SK-N-SH (cell line): ENCODE measurements at regions of chr5 and their contacts with region 1.

Region 1: DNA sequence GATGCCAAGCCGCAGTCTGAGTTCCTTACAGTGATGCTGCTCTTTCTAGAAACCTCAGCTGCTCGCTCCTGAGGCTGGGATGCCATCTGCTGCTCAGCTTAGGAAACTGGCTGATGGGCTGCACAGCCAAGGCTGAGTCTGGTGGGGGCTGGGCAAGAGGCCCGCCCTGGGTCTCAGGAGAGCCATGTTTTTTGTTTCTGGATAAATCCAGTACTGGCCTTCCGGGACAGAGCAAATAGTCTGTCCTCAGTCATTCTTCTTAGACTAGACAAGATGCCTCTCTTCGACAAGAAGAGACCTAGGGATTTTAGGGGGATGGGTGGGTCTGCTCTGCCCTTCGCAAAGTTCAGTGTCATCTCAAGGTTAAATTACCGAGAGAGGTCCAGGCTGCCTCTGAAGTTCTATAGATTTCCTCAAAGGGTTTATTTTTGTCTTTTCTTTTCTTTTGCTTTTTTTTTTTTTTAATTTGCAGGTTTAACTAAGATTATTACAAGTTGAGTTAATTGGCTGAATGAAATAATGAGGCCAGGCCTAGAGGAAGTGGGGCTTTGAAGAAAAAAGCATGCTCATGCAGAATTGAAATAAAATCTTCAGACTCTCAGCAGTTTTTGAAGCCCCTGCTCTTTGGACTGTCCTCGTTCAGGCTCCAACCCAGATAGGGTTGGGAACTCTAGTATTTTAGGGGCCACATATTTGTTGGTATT is 30.6 kb upstream of the MATR3 start:
- DNase-seq: peak; percentile 87
- H3K4me3 ChIP-seq: no peak overlapping the region
- H3K27ac ChIP-seq: peak overlapping the region in 1 of 2 experiments; percentile 39; a peak in 1 of 4 replicates
- H3K4me1 ChIP-seq: peaks cover 0 to 9% of the 10 kb centered on the region in 2 experiments; a peak in 1 of 4 replicates
- H3K27me3 ChIP-seq: no peaks in the 10 kb centered on the region
- CTCF ChIP-seq: peak; percentile 93
- EP300 ChIP-seq: no peak
- RAD21 ChIP-seq: peak; percentile 100

Region 2: GRCh38 chr5:138641547-138642298 is 621.2 kb before region 1 on chr5:
- CTCF ChIA-PET with region 1: interaction called, 13 read pairs
- POLR2A ChIA-PET with region 1: no interaction called
- DNase-seq: peak; percentile 74
- H3K4me3 ChIP-seq: peak overlapping the region in 1 of 2 experiments; percentile 44; a peak in 1 of 4 replicates
- H3K27ac ChIP-seq: no peak overlapping the region
- H3K4me1 ChIP-seq: peaks cover 0 to 19% of the 10 kb centered on the region in 2 experiments; a peak in 1 of 4 replicates
- H3K27me3 ChIP-seq: no peaks in the 10 kb centered on the region; the same call in 1 of the 2 replicates
- CTCF ChIP-seq: peak; percentile 91
- EP300 ChIP-seq: no peak
- RAD21 ChIP-seq: peak; percentile 87

Region 3: GRCh38 chr5:138649316-138649720 is 613.6 kb before region 1 on chr5:
- CTCF ChIA-PET with region 1: interaction called, 11 read pairs
- POLR2A ChIA-PET with region 1: no interaction called
- DNase-seq: no peak
- H3K4me3 ChIP-seq: no peak overlapping the region
- H3K27ac ChIP-seq: no peak overlapping the region
- H3K4me1 ChIP-seq: peaks cover 0 to 27% of the 10 kb centered on the region in 2 experiments; a peak in 1 of 4 replicates
- H3K27me3 ChIP-seq: no peaks in the 10 kb centered on the region
- CTCF ChIP-seq: no peak
- EP300 ChIP-seq: no peak
- RAD21 ChIP-seq: no peak

Region 4: DNA sequence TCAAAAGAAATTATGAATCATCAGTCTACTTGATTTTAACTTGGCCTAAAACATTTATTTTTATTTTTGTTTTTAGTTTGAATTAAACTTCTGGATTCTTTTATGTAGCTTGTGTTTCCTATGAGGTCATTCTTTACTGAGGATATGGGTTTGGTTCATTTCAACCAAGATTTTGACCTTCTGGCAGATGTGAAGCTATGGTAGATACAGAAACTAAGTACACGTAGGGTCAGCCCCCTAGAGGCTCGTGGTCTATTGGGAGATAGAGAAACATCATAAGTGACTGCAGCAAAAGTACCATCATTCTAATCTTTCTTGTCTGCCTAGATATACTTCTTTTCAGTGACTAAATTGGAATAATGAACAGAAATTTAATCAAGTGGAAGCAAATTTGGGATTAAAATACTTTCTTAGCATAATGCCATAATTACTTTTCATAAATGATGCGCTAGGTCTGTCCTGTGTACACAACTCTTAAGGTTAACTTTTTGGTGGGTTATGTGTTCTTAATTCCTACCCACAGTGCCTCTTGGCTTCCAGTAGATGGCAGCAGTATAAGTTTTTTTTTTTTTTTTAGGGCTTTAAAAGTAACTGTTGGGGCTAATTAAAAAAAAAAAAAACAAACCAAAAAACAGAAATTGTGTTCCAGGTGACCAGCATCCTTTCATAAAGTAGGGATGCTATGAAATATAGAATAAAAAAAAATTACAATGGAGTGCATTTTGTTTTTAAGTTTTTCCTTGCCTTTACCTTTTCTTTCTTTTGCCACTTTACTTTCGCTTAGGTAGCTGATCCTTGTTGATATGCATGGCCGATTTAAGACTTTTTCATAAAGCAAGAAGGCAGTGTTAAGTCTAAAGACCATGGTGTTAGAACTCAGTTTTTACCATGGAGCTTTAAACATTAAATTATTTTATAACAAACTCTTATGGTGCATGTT is 437.7 kb before region 1 on chr5:
- CTCF ChIA-PET with region 1: interaction called, 25 read pairs
- POLR2A ChIA-PET with region 1: no interaction called
- DNase-seq: peak; percentile 61
- H3K4me3 ChIP-seq: no peak overlapping the region
- H3K27ac ChIP-seq: peak overlapping the region; percentile 39 to 52; a peak in 3 of 4 replicates
- H3K4me1 ChIP-seq: no peaks in the 10 kb centered on the region; a peak in 2 of 4 replicates
- H3K27me3 ChIP-seq: no peaks in the 10 kb centered on the region
- CTCF ChIP-seq: peak; percentile 69
- EP300 ChIP-seq: no peak
- RAD21 ChIP-seq: peak; percentile 59; the same call in 1 of the 2 replicates

Region 5: GRCh38 chr5:138874771-138875551 is 387.9 kb before region 1 on chr5 and contains the start of gene LRRTM2:
- CTCF ChIA-PET with region 1: interaction called, 14 read pairs
- POLR2A ChIA-PET with region 1: no interaction called
- DNase-seq: peak; percentile 63
- H3K4me3 ChIP-seq: peak within 1 kb of the TSS; percentile 53 to 61
- H3K27ac ChIP-seq: peak within 1 kb of the TSS; percentile 78 to 92
- H3K4me1 ChIP-seq: peaks cover 43 to 48% of the 10 kb centered on the region in 2 experiments
- H3K27me3 ChIP-seq: no peaks in the 10 kb centered on the region
- CTCF ChIP-seq: no peak
- EP300 ChIP-seq: no peak
- RAD21 ChIP-seq: no peak
- polyA plus RNA-seq, gene LRRTM2: 0.38 and 0.68 TPM in 2 replicates

Region 6: GRCh38 chr5:139251281-139251687 is 11.6 kb before region 1 on chr5:
- CTCF ChIA-PET with region 1: interaction called, 10 read pairs
- POLR2A ChIA-PET with region 1: no interaction called
- DNase-seq: no peak
- H3K4me3 ChIP-seq: no peak overlapping the region
- H3K27ac ChIP-seq: no peak overlapping the region
- H3K4me1 ChIP-seq: peaks cover 0 to 5% of the 10 kb centered on the region in 2 experiments; a peak in 2 of 4 replicates
- H3K27me3 ChIP-seq: no peaks in the 10 kb centered on the region; the same call in 1 of the 2 replicates
- CTCF ChIP-seq: peak; percentile 39
- EP300 ChIP-seq: no peak
- RAD21 ChIP-seq: no peak

Region 7: DNA sequence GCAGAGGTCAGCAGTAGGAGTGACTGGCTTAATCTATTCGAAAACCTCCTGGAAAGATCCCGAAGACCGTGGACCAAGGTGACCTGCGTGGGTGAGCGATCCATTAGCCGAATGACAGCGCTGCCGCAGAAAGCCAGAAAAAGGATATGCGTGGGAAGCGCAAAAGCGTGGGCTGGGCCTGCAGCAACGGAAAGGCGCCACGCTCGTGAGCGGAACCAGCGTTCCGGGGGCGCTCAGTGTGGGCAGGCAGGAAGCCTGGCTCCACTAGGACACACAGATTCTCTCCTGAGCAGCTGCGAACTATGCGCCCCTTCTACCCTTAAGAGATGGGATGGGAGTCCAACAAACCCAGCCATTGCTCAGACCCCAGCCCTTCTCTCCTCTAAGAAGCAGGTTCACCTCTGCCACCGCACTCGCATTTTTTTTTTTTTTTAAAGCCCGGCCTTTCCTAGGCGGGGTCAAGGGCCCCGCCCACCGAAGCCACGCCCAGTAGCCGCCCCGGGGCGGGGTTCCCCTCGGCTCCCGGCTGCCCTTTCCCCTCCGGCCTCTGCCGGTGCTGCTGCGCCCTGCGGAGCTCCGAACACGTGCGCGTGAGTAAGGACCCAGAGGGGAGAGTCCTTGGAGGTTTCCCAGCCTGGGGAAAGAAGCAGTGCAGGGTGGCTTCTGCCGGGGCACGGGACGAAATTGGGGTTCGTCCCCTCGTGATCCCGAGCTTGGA is 10.8 kb after region 1 on chr5:
- CTCF ChIA-PET with region 1: interaction called, 11 read pairs
- POLR2A ChIA-PET with region 1: no interaction called
- DNase-seq: peak; percentile 97
- H3K4me3 ChIP-seq: peak overlapping the region; percentile 61 to 69
- H3K27ac ChIP-seq: peak overlapping the region; percentile 63 to 64; a peak in 3 of 4 replicates
- H3K4me1 ChIP-seq: peaks cover 20 to 26% of the 10 kb centered on the region in 2 experiments; a peak in 2 of 4 replicates
- H3K27me3 ChIP-seq: no peaks in the 10 kb centered on the region
- CTCF ChIP-seq: 0 out of 2 replicates have a peak, but pooled peaks have one; percentile 6
- EP300 ChIP-seq: no peak
- RAD21 ChIP-seq: no peak